ENCODE measurements at regions of chr22 and their contacts with region 1.

Region 1: GRCh38 chr22:26952451-26953011 is 295.1 kb downstream of the MIAT start:
- DNase-seq: no peak
- H3K4me3 ChIP-seq: no peak overlapping the region
- H3K27ac ChIP-seq: no peak overlapping the region
- H3K4me1 ChIP-seq: no peaks in the 10 kb centered on the region
- H3K27me3 ChIP-seq: peaks cover 2% of the 10 kb centered on the region
- CTCF ChIP-seq: no peak

Region 2: GRCh38 chr22:26632422-26633155 is 319.9 kb before region 1 on chr22:
- CTCF ChIA-PET with region 1: no interaction called
- dilution Hi-C with region 1: no loop called
- in situ Hi-C with region 1: no loop called
- intact Hi-C with region 1: no loop called
- DNase-seq: no peak
- H3K4me3 ChIP-seq: no peak overlapping the region
- H3K27ac ChIP-seq: no peak overlapping the region
- H3K4me1 ChIP-seq: no peaks in the 10 kb centered on the region
- H3K27me3 ChIP-seq: no peaks in the 10 kb centered on the region
- CTCF ChIP-seq: no peak

Region 3: GRCh38 chr22:26922806-26923205 is 29.7 kb before region 1 on chr22:
- CTCF ChIA-PET with region 1: no interaction called
- dilution Hi-C with region 1: no loop called
- in situ Hi-C with region 1: no loop called
- intact Hi-C with region 1: no loop called
- DNase-seq: no peak
- H3K4me3 ChIP-seq: no peak overlapping the region
- H3K27ac ChIP-seq: no peak overlapping the region
- H3K4me1 ChIP-seq: no peaks in the 10 kb centered on the region
- H3K27me3 ChIP-seq: no peaks in the 10 kb centered on the region
- CTCF ChIP-seq: no peak

Region 4: GRCh38 chr22:26995235-26995634 is 42.7 kb after region 1 on chr22:
- CTCF ChIA-PET with region 1: interaction called, 15 read pairs
- dilution Hi-C with region 1: no loop called
- in situ Hi-C with region 1: no loop called
- intact Hi-C with region 1: no loop called
- DNase-seq: no peak
- H3K4me3 ChIP-seq: no peak overlapping the region
- H3K27ac ChIP-seq: no peak overlapping the region
- H3K4me1 ChIP-seq: no peaks in the 10 kb centered on the region
- H3K27me3 ChIP-seq: no peaks in the 10 kb centered on the region
- CTCF ChIP-seq: no peak

Region 5: DNA sequence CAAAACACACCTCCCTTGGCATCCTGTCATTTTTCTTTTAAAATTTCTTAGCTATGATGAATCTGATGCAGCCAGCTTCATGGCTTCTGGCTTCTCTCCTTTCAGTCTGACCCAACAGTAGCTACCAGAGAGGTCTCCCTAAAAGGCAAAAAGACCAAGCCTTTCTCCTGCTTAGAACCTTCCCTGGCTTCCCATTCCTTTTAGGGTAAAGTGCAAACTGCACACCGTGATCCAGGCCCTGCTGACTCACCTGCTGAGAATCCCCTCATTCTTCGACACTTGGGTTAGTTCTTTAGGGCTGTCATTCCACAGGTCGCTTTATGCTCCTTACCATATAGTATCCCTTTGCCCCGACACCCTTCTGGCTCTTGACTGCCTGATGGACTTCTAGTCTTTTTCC is 67.3 kb after region 1 on chr22:
- CTCF ChIA-PET with region 1: no interaction called
- dilution Hi-C with region 1: no loop called
- in situ Hi-C with region 1: no loop called
- intact Hi-C with region 1: no loop called
- DNase-seq: peak; percentile 8
- H3K4me3 ChIP-seq: no peak overlapping the region
- H3K27ac ChIP-seq: no peak overlapping the region
- H3K4me1 ChIP-seq: no peaks in the 10 kb centered on the region
- H3K27me3 ChIP-seq: no peaks in the 10 kb centered on the region
- CTCF ChIP-seq: no peak